Calu3 (cell line): ENCODE measurements at regions of chr2 and their contacts with region 1.

Region 1: GRCh38 chr2:235263205-235264122 is 230.4 kb upstream of the AGAP1 start:
- DNase-seq: peak; percentile 69
- H3K4me3 Mint-ChIP-seq: peak overlapping the region; percentile 64
- H3K27ac Mint-ChIP-seq: peak overlapping the region; percentile 37
- H3K4me1 Mint-ChIP-seq: peaks cover 23% of the 10 kb centered on the region
- H3K27me3 Mint-ChIP-seq: peaks cover 42% of the 10 kb centered on the region
- CTCF ChIP-seq: no peak

Region 2: DNA sequence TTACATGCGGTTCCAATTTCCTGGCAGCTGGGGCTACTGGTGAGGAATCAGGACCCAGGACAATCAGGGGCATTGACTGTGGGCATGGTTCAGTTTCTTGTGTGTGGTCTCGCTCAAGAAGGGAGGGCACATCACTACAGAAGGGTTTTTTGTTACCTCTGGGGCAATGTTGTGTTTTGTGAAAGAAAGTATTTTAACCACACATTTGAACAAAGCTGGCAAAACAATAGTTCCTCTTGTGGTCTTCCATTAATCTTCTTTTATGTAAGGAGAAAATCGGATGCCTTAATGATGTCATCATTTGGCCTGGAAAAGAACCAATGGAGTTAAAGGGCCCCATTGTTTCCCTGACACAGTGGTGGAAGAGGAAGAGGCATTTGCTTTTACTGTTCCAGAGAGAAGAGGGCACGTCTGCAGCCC is 114.2 kb before region 1 on chr2:
- CTCF ChIA-PET with region 1: no interaction called
- intact Hi-C with region 1: loop called (anchors 10 kb)
- DNase-seq: no peak
- H3K4me3 Mint-ChIP-seq: no peak overlapping the region
- H3K27ac Mint-ChIP-seq: no peak overlapping the region
- H3K4me1 Mint-ChIP-seq: no peaks in the 10 kb centered on the region
- H3K27me3 Mint-ChIP-seq: peaks cover 75% of the 10 kb centered on the region
- CTCF ChIP-seq: no peak

Region 3: GRCh38 chr2:235358981-235359471 is 95.6 kb after region 1 on chr2:
- CTCF ChIA-PET with region 1: no interaction called
- intact Hi-C with region 1: no loop called
- DNase-seq: peak; percentile 67
- H3K4me3 Mint-ChIP-seq: no peak overlapping the region
- H3K27ac Mint-ChIP-seq: peak overlapping the region; percentile 34
- H3K4me1 Mint-ChIP-seq: peaks cover 17% of the 10 kb centered on the region
- H3K27me3 Mint-ChIP-seq: peaks cover 24% of the 10 kb centered on the region
- CTCF ChIP-seq: no peak